Natural killer cell (primary cell): ENCODE measurements at regions of chr11 and their contacts with region 1.

Region 1: GRCh38 chr11:65615229-65615941 is at the start of gene PCNX3:
- DNase-seq: peak; percentile 99 to 100
- ATAC-seq: peak; percentile 84 to 95 (median 85)
- H3K4me3 ChIP-seq: peak within 1 kb of the TSS; percentile 86
- H3K4me3 Mint-ChIP-seq: peak within 1 kb of the TSS; percentile 98
- H3K27ac ChIP-seq: peak within 1 kb of the TSS; percentile 97
- H3K27ac Mint-ChIP-seq: peak within 1 kb of the TSS; percentile 96 to 97
- H3K4me1 ChIP-seq: peaks cover 58% of the 10 kb centered on the region
- H3K4me1 Mint-ChIP-seq: peaks cover 32 to 52% of the 10 kb centered on the region in 2 donors
- H3K27me3 ChIP-seq: no peaks in the 10 kb centered on the region
- H3K27me3 Mint-ChIP-seq: no peaks in the 10 kb centered on the region
- CTCF ChIP-seq: no peak
- total RNA-seq, gene PCNX3: 101 to 105 (median 102) TPM

Region 2: GRCh38 chr11:65497141-65498041 is 118.0 kb before region 1 on chr11:
- intact Hi-C with region 1: no loop called
- DNase-seq: peak; percentile 98 to 99
- ATAC-seq: peak; percentile 81 to 95 (median 84)
- H3K4me3 ChIP-seq: peak overlapping the region; percentile 75
- H3K4me3 Mint-ChIP-seq: no peak overlapping the region
- H3K27ac ChIP-seq: peak overlapping the region; percentile 96
- H3K27ac Mint-ChIP-seq: no peak overlapping the region
- H3K4me1 ChIP-seq: peaks cover 40% of the 10 kb centered on the region
- H3K4me1 Mint-ChIP-seq: peaks cover 13 to 17% of the 10 kb centered on the region in 2 donors
- H3K27me3 ChIP-seq: no peaks in the 10 kb centered on the region
- H3K27me3 Mint-ChIP-seq: no peaks in the 10 kb centered on the region
- CTCF ChIP-seq: no peak

Region 3: GRCh38 chr11:65540297-65541092 is 74.9 kb before region 1 on chr11:
- intact Hi-C with region 1: loop called (anchors 2 kb)
- DNase-seq: peak; percentile 88 to 93
- ATAC-seq: peak; percentile 88 to 96 (median 90)
- H3K4me3 ChIP-seq: peak overlapping the region; percentile 71
- H3K4me3 Mint-ChIP-seq: peak overlapping the region; percentile 88
- H3K27ac ChIP-seq: peak overlapping the region; percentile 70
- H3K27ac Mint-ChIP-seq: peak overlapping the region; percentile 39 to 76
- H3K4me1 ChIP-seq: peaks cover 17% of the 10 kb centered on the region
- H3K4me1 Mint-ChIP-seq: peaks cover 7 to 40% of the 10 kb centered on the region in 2 donors
- H3K27me3 ChIP-seq: no peaks in the 10 kb centered on the region
- H3K27me3 Mint-ChIP-seq: no peaks in the 10 kb centered on the region
- CTCF ChIP-seq: peak; percentile 52

Region 4: GRCh38 chr11:65652511-65653231 is 37.3 kb after region 1 on chr11:
- intact Hi-C with region 1: loop called (anchors 5 kb)
- DNase-seq: peak; percentile 98
- ATAC-seq: peak; percentile 78 to 95 (median 80)
- H3K4me3 ChIP-seq: peak overlapping the region; percentile 54
- H3K4me3 Mint-ChIP-seq: peak overlapping the region; percentile 95
- H3K27ac ChIP-seq: peak overlapping the region; percentile 95
- H3K27ac Mint-ChIP-seq: peak overlapping the region; percentile 97 to 99
- H3K4me1 ChIP-seq: peaks cover 49% of the 10 kb centered on the region
- H3K4me1 Mint-ChIP-seq: peaks cover 51 to 73% of the 10 kb centered on the region in 2 donors
- H3K27me3 ChIP-seq: no peaks in the 10 kb centered on the region
- H3K27me3 Mint-ChIP-seq: no peaks in the 10 kb centered on the region
- CTCF ChIP-seq: no peak

Region 5: DNA sequence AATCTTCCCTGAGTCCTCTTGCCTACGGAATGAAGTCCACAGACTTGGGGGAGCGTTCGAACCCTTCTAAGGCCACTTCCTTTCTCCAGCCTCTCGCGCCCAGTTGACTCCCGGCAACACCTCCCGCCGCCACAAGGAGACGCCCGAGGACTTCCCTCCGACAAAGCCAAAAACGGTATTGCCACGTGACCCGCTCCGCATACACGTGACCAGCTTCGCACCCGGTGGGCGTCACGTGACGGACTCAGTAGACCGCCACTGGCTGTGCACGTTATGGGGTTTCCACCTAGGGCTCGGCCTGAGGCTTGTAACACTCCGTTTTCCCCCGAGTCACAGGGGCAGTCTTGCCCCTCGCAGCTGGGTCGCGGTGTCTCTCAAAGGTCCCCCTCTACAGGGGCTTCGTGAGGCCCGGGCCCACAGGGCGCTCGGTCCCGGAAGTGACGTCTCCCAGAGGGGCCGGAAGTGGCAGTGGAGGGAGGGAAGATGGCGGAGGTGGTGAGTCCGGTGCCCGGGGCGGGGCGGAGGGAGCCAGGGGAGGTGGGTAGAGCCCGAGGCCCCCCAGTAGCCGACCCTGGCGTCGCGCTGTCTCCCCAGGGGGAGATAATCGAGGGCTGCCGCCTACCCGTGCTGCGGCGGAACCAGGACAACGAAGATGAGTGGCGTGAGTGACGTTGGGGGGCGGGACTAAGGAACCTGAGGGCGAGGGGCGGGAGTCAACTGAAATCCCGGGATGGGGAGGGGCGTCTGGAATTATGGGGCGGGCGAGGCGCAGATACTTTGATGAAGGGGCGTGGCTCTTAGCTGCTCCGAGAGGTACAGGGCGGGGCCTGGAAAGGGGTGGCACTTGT is 96.6 kb after region 1 on chr11 and contains the start of gene KAT5:
- intact Hi-C with region 1: loop called (anchors 1 kb)
- DNase-seq: peak; percentile 99
- ATAC-seq: peak; percentile 84 to 90 (median 85)
- H3K4me3 ChIP-seq: peak within 1 kb of the TSS; percentile 95
- H3K4me3 Mint-ChIP-seq: peak within 1 kb of the TSS; percentile 94
- H3K27ac ChIP-seq: peak within 1 kb of the TSS; percentile 99
- H3K27ac Mint-ChIP-seq: peak within 1 kb of the TSS; percentile 95 to 99
- H3K4me1 ChIP-seq: peaks cover 17% of the 10 kb centered on the region
- H3K4me1 Mint-ChIP-seq: peaks cover 0 to 22% of the 10 kb centered on the region in 2 donors
- H3K27me3 ChIP-seq: no peaks in the 10 kb centered on the region
- H3K27me3 Mint-ChIP-seq: no peaks in the 10 kb centered on the region
- CTCF ChIP-seq: peak; percentile 94
- total RNA-seq, gene KAT5: 140 to 155 (median 146) TPM

Region 6: DNA sequence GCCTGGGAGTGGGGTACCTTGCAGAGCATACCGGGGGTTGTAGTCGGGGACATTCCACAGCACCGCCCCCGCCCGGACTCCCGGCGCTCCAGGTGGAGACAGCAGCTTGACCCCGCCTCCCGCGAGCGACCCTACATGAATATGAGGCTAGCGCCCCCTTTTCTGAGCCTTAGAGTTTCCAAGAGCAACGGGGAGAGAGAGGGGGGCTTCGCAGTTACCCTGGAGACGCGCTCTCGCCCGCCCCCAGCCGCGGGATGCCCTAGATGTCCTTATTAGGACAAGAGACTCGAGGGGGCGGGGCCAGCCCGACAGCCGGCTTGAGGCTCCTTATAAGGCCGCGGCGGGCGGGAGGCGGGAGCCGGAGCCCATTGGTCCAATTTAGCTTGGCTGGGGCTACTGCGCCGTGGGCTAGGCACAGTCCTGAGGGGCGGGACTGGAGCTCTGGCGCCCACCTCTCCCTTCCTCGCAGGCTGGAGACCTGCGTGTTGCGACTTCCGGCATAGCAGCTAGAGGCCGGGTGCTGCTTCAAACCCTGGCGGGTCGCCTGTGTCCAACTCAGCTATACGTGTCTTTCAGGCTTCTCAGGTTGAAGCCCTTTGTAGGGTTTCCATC is 243.9 kb after region 1 on chr11:
- intact Hi-C with region 1: loop called (anchors 1 kb)
- DNase-seq: peak; percentile 94 to 96
- ATAC-seq: peak; percentile 65 to 82 (median 66)
- H3K4me3 ChIP-seq: peak overlapping the region; percentile 80
- H3K4me3 Mint-ChIP-seq: peak overlapping the region; percentile 98
- H3K27ac ChIP-seq: peak overlapping the region; percentile 85
- H3K27ac Mint-ChIP-seq: peak overlapping the region; percentile 97 to 98
- H3K4me1 ChIP-seq: peaks cover 51% of the 10 kb centered on the region
- H3K4me1 Mint-ChIP-seq: peaks cover 51 to 64% of the 10 kb centered on the region in 2 donors
- H3K27me3 ChIP-seq: no peaks in the 10 kb centered on the region
- H3K27me3 Mint-ChIP-seq: no peaks in the 10 kb centered on the region
- CTCF ChIP-seq: no peak

Region 7: GRCh38 chr11:66001942-66002647 is 386.7 kb after region 1 on chr11 and contains the starts of genes BANF1 and EIF1AD:
- intact Hi-C with region 1: loop called (anchors 5 kb)
- DNase-seq: peak; percentile 90 to 98
- ATAC-seq: peak; percentile 84 to 92 (median 85)
- H3K4me3 ChIP-seq: peak within 1 kb of the TSS; percentile 54
- H3K4me3 Mint-ChIP-seq: peak within 1 kb of the TSS; percentile 99
- H3K27ac ChIP-seq: peak within 1 kb of the TSS; percentile 77
- H3K27ac Mint-ChIP-seq: peak within 1 kb of the TSS; percentile 99
- H3K4me1 ChIP-seq: peaks cover 24% of the 10 kb centered on the region
- H3K4me1 Mint-ChIP-seq: peaks cover 22 to 41% of the 10 kb centered on the region in 2 donors
- H3K27me3 ChIP-seq: no peaks in the 10 kb centered on the region
- H3K27me3 Mint-ChIP-seq: no peaks in the 10 kb centered on the region
- CTCF ChIP-seq: no peak
- total RNA-seq, gene BANF1: 87.8 to 107 (median 90.4) TPM
- total RNA-seq, gene EIF1AD: 49.9 to 74.2 (median 62.8) TPM

Region 8: GRCh38 chr11:66936311-66936711 is 1320.9 kb after region 1 on chr11:
- intact Hi-C with region 1: no loop called
- DNase-seq: no peak
- ATAC-seq: no peak
- H3K4me3 ChIP-seq: no peak overlapping the region
- H3K4me3 Mint-ChIP-seq: no peak overlapping the region
- H3K27ac ChIP-seq: no peak overlapping the region
- H3K27ac Mint-ChIP-seq: no peak overlapping the region
- H3K4me1 ChIP-seq: no peaks in the 10 kb centered on the region
- H3K4me1 Mint-ChIP-seq: no peaks in the 10 kb centered on the region
- H3K27me3 ChIP-seq: no peaks in the 10 kb centered on the region
- H3K27me3 Mint-ChIP-seq: peaks cover 4 to 15% of the 10 kb centered on the region in 2 donors
- CTCF ChIP-seq: no peak